Testis (tissue), 5 donors: ENCODE measurements at regions of chr13 and their contacts with region 1.

Region 1: DNA sequence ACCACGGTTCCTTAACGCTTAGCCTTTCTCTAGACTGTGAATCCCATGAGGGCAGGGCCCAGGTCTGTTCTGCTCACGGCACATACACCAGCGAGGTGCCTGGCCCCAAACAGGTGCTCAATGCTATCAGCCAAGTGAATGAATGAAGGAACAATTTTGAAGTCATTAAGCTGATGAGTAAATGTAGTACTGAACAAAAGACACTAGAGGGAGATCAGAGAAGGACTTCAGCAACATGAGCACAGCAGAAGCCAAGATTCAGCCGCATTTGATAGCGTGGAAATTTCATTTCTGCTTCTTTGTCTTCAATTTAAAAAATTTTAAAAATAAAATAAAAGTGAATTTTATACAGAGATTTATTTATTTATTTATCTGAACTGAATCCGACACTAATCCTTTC is 20.1 kb upstream of the MYO16 start:
- DNase-seq: peak; percentile 23
- H3K4me3 ChIP-seq: no peak overlapping the region
- H3K27ac ChIP-seq: no peak overlapping the region
- H3K4me1 ChIP-seq: no peaks in the 10 kb centered on the region
- H3K27me3 ChIP-seq: no peaks in the 10 kb centered on the region
- CTCF ChIP-seq: peak; percentile 14 to 25 (median 21)
- POLR2A ChIP-seq: no peak

Region 2: DNA sequence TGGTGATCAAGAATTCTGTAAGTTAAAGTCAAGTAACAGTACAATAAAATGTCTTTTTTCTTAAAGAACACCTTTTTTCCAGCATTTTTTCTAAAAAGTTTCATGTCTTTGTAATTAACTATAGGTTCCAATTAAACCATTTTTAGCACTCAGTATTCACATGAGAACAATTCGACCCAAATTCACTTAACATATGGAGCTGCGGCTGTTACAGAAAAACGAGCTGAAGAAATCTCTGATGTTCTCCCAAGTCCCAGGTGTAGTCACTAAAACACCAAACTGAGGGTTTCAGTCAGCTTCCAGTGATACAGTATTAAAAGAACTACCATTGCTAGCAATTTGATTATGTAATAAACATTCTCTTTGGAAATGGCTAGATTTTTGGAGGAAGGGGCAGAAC is 222.2 kb before region 1 on chr13:
- intact Hi-C with region 1: loop called (anchors 5 kb)
- DNase-seq: no peak
- H3K4me3 ChIP-seq: no peak overlapping the region
- H3K27ac ChIP-seq: no peak overlapping the region
- H3K4me1 ChIP-seq: no peaks in the 10 kb centered on the region
- H3K27me3 ChIP-seq: no peaks in the 10 kb centered on the region
- CTCF ChIP-seq: no peak
- POLR2A ChIP-seq: no peak